ENCODE measurements at regions of chr1 and their contacts with region 1.

Region 1: DNA sequence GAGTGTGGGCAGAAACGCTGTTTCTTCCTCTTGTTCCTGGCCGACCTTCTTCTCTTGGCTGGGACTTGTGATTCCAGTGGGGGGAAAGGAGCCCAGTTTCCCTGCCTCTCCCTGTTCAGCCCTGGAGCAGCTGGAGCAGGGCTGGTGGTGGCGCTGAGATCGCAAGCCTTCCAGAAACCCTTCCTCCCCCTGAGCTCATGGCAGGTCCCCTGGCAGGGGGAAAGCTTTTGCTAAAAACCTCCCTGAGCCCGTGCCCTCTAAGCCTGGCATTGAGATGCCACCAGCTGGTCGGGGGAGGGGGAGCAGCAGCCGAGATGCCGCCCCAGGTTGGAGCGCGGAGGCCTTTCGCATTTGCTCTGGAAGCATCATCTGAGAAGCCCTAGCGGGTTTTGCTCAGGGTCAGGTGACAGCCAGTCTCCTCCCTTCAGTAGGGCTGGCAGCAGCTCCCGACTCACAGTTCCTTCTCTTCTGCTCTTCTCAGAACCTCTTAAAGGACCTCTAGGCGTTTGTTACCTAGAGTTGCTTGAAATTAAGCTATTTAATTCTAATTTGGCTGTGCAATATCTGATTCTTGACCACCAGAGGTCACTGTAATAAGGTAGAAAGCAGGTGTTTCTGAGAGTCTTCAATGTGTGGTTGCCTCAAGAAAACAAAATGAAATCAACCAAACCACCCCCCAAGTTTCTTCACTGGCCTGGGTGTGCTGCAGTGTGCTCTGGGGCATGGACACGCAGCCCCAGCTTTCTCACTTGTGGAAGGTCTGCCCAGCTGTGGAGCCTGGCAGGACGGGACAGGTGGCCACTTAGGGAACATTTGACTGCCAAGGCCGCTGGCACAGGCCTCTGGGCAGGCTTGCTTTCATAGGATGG is 257.3 kb downstream of the CAMTA1 start:
- DNase-seq: no peak
- ATAC-seq: no peak
- H3K4me3 ChIP-seq: no peak overlapping the region
- H3K4me1 ChIP-seq: no peaks in the 10 kb centered on the region
- CTCF ChIP-seq: no peak

Region 2: DNA sequence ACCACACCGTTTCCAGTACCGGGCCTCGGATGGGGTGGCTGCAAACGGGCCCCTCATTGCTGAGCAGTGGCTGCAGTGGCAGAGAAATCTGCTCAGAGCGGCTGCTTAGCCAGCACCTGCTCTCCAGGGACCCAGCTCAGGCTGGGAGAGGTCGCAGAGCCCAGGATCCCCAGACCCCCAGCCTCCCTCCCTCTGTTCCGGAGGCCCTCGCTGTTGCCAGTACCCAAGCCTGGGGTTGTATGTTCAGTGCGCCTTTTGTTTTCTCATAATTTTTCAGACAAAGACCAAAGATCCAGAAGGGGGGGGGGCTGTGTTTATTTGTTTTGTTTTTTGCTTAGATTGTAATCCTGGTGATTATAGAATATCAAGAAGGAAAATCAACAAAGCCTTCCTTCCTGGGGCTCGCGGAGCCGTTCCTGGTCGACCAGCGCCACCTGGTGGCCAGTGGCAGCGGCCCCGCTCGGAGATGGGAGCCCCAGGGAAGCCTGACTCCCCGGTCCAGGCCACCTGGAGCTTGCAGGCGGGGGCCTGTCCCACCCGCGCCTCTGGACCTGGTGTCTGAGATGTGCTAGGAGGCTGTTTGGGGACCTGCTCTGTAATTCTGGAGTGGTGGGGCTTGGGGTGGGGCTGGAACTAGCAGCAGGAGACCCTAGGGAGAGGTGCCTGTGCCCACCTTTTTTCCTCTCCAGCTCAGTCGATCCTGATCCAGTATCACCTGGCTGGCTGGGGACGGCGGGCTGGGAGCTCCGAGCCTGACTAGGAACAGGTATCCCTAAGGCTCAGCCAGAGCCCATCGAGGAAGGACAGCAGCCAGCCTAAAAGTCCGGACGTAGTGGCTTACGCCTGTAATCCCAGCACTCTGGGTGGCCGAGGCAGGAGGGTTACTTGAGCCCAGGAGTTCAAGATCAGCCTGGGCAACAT is 604.7 kb after region 1 on chr1:
- intact Hi-C with region 1: loop called in 1 of 2 experiments (anchors 5 kb)
- DNase-seq: peak; percentile 66 to 84 (median 80)
- ATAC-seq: peak; percentile 74
- H3K4me3 ChIP-seq: no peak overlapping the region
- H3K4me1 ChIP-seq: no peaks in the 10 kb centered on the region
- CTCF ChIP-seq: peak; percentile 91